Activated naive CD4-positive, alpha-beta T cell treated with anti-CD3 and anti-CD28 coated beads for 36 hours (primary cell): ENCODE measurements at regions of chr14 and their contacts with region 1.

Region 1: GRCh38 chr14:65336191-65336591 is 76.3 kb upstream of the FUT8 start:
- DNase-seq: peak; percentile 77
- H3K4me3 Mint-ChIP-seq: peak overlapping the region; percentile 72
- H3K27ac Mint-ChIP-seq: peak overlapping the region; percentile 93
- H3K4me1 Mint-ChIP-seq: peaks cover 55% of the 10 kb centered on the region
- H3K27me3 Mint-ChIP-seq: no peaks in the 10 kb centered on the region

Region 2: GRCh38 chr14:64855721-64856528 is 480.3 kb before region 1 on chr14:
- CTCF ChIA-PET with region 1: no interaction called
- intact Hi-C with region 1: no loop called
- DNase-seq: no peak
- H3K4me3 Mint-ChIP-seq: no peak overlapping the region
- H3K27ac Mint-ChIP-seq: no peak overlapping the region
- H3K4me1 Mint-ChIP-seq: no peaks in the 10 kb centered on the region
- H3K27me3 Mint-ChIP-seq: peaks cover 6% of the 10 kb centered on the region

Region 3: GRCh38 chr14:64928239-64929013 is 407.8 kb before region 1 on chr14:
- CTCF ChIA-PET with region 1: no interaction called
- intact Hi-C with region 1: loop called (anchors 10 kb)
- DNase-seq: no peak
- H3K4me3 Mint-ChIP-seq: no peak overlapping the region
- H3K27ac Mint-ChIP-seq: no peak overlapping the region
- H3K4me1 Mint-ChIP-seq: peaks cover 25% of the 10 kb centered on the region
- H3K27me3 Mint-ChIP-seq: no peaks in the 10 kb centered on the region

Region 4: DNA sequence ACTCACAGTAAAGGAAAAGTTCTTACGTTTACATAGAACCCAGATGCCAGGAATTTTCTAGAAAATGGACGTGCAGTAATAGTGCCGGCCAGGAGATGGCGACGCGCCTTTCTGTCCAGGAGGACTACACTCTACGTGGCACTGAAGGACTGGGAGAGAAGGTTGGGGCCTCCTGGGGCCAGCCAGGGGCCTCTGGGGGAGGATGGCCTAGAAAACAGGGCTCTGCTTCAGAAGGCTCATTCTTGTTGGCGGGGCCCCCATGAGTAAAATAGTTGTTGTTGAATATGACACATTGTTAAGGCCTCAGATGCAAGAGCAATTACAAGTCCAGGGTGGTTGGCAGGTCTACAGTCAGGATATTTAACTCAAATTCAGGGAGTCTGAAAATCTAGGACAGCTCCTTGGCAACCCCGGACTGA is 113.7 kb before region 1 on chr14:
- CTCF ChIA-PET with region 1: interaction called, 3 read pairs
- intact Hi-C with region 1: loop called (anchors 5 kb)
- DNase-seq: peak; percentile 74
- H3K4me3 Mint-ChIP-seq: no peak overlapping the region
- H3K27ac Mint-ChIP-seq: no peak overlapping the region
- H3K4me1 Mint-ChIP-seq: peaks cover 28% of the 10 kb centered on the region
- H3K27me3 Mint-ChIP-seq: no peaks in the 10 kb centered on the region

Region 5: GRCh38 chr14:65302571-65303189 is 33.5 kb before region 1 on chr14:
- CTCF ChIA-PET with region 1: interaction called, 4 read pairs
- intact Hi-C with region 1: loop called (anchors 1 kb)
- DNase-seq: peak; percentile 82
- H3K4me3 Mint-ChIP-seq: peak overlapping the region; percentile 23
- H3K27ac Mint-ChIP-seq: peak overlapping the region; percentile 95
- H3K4me1 Mint-ChIP-seq: peaks cover 61% of the 10 kb centered on the region
- H3K27me3 Mint-ChIP-seq: no peaks in the 10 kb centered on the region

Region 6: DNA sequence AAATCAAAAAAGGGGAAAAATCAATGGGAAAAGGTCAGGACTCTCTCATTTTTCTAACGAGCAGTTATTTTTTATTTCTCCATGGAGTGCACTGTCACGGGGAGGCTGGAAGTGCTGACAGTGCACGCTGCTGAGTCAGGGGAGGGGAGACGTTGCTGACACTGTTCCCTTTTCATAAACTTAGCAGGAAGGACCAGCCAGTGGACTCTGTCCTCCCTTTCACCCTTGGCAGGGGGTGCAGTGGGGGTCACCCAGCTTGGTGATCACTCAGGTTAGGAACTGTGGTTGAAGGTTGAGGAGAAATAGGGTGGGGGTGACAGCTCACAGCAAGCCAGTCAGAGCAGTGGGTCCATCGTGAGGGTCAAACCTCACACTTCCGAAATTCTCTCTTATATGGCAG is 10.8 kb after region 1 on chr14:
- CTCF ChIA-PET with region 1: no interaction called
- intact Hi-C with region 1: no loop called
- DNase-seq: no peak
- H3K4me3 Mint-ChIP-seq: no peak overlapping the region
- H3K27ac Mint-ChIP-seq: no peak overlapping the region
- H3K4me1 Mint-ChIP-seq: peaks cover 13% of the 10 kb centered on the region
- H3K27me3 Mint-ChIP-seq: no peaks in the 10 kb centered on the region

Region 7: DNA sequence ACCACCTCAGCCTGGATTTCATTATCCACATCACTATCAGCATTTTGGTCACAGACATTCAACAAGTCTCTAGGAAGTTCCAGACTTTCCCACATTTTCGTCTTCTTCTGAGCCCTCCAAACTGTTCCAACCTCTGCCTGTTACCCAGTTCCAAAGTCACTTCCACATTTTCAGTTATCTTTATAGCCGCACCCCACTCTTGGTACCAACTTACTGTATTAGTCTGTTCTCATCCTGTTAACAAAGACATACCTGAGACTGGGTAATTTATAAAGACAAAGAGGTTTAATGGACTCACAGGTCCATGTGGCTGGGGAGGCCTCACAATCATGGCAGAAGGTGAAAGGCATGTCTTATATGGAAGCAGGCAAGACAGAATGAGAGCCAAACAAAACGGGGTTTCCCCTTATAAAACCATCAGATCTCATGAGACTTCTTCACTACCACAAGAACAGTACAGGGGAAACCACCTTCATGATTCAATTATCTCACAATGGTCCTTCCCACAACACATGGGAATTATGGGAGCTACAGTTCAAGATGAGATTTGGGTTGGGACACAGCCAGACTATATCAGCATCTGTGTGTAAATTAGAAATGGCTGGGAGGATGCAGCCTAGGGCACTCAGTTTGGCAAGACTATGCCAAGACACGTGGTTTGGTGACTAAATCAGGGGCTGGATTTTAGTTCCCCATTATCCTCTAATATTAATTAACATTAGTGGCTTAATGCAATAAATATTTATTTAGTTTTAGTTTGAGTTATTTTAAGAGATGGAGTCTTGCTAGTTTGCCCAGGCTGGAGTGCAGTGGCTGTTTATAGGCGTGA is 60.1 kb after region 1 on chr14:
- CTCF ChIA-PET with region 1: no interaction called
- intact Hi-C with region 1: loop called (anchors 1 kb)
- DNase-seq: peak; percentile 19
- H3K4me3 Mint-ChIP-seq: no peak overlapping the region
- H3K27ac Mint-ChIP-seq: peak overlapping the region; percentile 42
- H3K4me1 Mint-ChIP-seq: peaks cover 24% of the 10 kb centered on the region
- H3K27me3 Mint-ChIP-seq: no peaks in the 10 kb centered on the region

Region 8: DNA sequence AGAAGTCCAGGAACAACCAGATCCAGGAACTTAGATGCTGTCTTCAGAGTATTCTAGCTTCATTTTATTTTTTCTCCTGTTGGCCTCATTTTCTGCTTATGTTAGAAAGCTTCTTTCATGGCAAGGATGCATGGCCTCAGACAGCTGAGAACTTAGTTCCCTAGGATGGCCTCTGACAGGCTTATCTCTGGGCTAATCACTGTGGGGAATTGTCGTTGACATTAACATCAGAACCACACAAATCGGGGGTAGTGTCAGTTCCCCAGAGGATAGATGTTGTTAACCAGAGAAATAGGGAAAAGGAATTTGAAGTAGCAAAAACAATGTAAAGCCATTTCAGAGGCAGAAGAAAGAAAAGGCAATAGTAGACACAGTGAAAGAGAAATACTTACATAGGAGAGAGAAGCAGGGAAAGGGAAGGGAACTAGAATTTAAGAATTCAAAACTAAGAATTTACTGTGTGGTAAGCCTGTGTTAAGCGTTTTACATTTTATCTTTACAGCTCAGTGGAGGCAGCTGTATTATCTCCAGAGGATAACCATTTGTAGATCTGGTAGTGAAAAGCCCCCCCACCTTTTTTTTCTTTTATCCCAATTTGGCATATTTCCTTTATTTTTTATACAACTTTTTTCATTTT is 98.1 kb after region 1 on chr14:
- CTCF ChIA-PET with region 1: no interaction called
- intact Hi-C with region 1: no loop called
- DNase-seq: no peak
- H3K4me3 Mint-ChIP-seq: no peak overlapping the region
- H3K27ac Mint-ChIP-seq: no peak overlapping the region
- H3K4me1 Mint-ChIP-seq: peaks cover 37% of the 10 kb centered on the region
- H3K27me3 Mint-ChIP-seq: no peaks in the 10 kb centered on the region

Region 9: GRCh38 chr14:65804752-65805473 is 468.7 kb after region 1 on chr14:
- CTCF ChIA-PET with region 1: no interaction called
- intact Hi-C with region 1: no loop called
- DNase-seq: no peak
- H3K4me3 Mint-ChIP-seq: no peak overlapping the region
- H3K27ac Mint-ChIP-seq: no peak overlapping the region
- H3K4me1 Mint-ChIP-seq: peaks cover 4% of the 10 kb centered on the region
- H3K27me3 Mint-ChIP-seq: no peaks in the 10 kb centered on the region

Region 10: GRCh38 chr14:65927931-65928356 is 591.8 kb after region 1 on chr14:
- CTCF ChIA-PET with region 1: no interaction called
- intact Hi-C with region 1: loop called (anchors 1 kb)
- DNase-seq: peak; percentile 96
- H3K4me3 Mint-ChIP-seq: no peak overlapping the region
- H3K27ac Mint-ChIP-seq: peak overlapping the region; percentile 22
- H3K4me1 Mint-ChIP-seq: peaks cover 41% of the 10 kb centered on the region
- H3K27me3 Mint-ChIP-seq: no peaks in the 10 kb centered on the region